Activated T-helper 1 cell treated with anti-CD3 and anti-CD28 coated beads, Interleukin-12 subunit alpha, Interleukin-12 subunit beta, Interleukin-2, Interleukin-4 antibody, amounts not matched to agents 30 ng/mL and 10 ng/mL and 1 ng/mL, durations not matched to agents 14 hours and 24 hours and 36 hours (primary cell): ENCODE measurements at regions of chr17 and their contacts with region 1.

Region 1: GRCh38 chr17:66633317-66633965 is 201.5 kb upstream of the CACNG5 start:
- DNase-seq: peak; percentile 66
- H3K4me3 Mint-ChIP-seq: peak overlapping the region; percentile 41
- H3K27ac Mint-ChIP-seq: peak overlapping the region; percentile 85
- H3K4me1 Mint-ChIP-seq: peaks cover 78% of the 10 kb centered on the region
- H3K27me3 Mint-ChIP-seq: no peaks in the 10 kb centered on the region

Region 2: DNA sequence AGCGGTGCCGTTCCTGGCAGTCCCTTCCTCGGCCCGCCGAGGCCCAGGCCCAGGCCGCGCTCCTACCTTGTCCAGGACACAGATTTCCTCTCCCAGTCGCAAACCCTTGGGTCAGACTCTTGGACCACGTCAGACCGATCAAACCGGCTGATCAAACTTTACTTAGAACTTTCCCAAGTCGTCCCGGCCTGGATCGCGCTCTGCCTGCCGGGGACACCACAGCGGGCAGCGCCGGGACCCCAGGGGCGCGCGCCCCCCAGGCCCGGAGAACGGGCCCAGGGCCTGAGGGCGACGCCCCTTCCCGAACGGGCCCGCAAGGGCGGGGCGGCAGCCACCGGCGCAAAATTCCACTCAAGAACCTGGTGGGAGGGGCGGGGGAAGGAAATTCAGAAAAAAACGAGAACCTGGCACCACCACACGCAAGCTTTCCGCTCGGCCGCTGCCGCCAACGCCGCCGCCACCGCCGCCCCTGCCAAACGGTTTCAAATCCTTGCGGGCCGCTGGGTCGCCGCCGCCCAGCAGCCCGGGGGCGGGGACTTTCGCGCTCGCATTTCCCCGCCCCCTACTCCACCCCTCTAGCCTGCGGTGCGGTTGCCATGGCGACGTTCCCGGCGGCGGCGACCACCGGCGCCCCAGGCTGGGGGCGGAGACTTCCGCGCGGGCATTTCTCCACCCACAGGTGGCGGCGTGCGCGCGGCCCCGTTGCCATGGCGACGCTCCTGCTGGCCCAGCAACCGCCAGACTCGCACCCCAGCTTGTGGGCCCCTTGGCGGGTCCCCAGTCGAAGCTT is 441.7 kb before region 1 on chr17 and contains the start of gene CEP112:
- intact Hi-C with region 1: loop called (anchors 1 kb)
- DNase-seq: peak; percentile 81
- H3K4me3 Mint-ChIP-seq: peak within 1 kb of the TSS; percentile 80
- H3K27ac Mint-ChIP-seq: peak within 1 kb of the TSS; percentile 70
- H3K4me1 Mint-ChIP-seq: peaks cover 15% of the 10 kb centered on the region
- H3K27me3 Mint-ChIP-seq: peaks cover 6% of the 10 kb centered on the region
- total RNA-seq, gene CEP112: 1.3 and 1.7 TPM in 2 replicates

Region 3: GRCh38 chr17:66255112-66255511 is 378.3 kb before region 1 on chr17:
- intact Hi-C with region 1: loop called (anchors 2 kb)
- DNase-seq: peak; percentile 26
- H3K4me3 Mint-ChIP-seq: no peak overlapping the region
- H3K27ac Mint-ChIP-seq: peak overlapping the region; percentile 76
- H3K4me1 Mint-ChIP-seq: peaks cover 20% of the 10 kb centered on the region
- H3K27me3 Mint-ChIP-seq: no peaks in the 10 kb centered on the region

Region 4: GRCh38 chr17:66508896-66509843 is 124.3 kb before region 1 on chr17:
- intact Hi-C with region 1: loop called (anchors 1 kb)
- DNase-seq: peak; percentile 29
- H3K4me3 Mint-ChIP-seq: peak overlapping the region; percentile 77
- H3K27ac Mint-ChIP-seq: peak overlapping the region; percentile 97
- H3K4me1 Mint-ChIP-seq: peaks cover 82% of the 10 kb centered on the region
- H3K27me3 Mint-ChIP-seq: no peaks in the 10 kb centered on the region

Region 5: DNA sequence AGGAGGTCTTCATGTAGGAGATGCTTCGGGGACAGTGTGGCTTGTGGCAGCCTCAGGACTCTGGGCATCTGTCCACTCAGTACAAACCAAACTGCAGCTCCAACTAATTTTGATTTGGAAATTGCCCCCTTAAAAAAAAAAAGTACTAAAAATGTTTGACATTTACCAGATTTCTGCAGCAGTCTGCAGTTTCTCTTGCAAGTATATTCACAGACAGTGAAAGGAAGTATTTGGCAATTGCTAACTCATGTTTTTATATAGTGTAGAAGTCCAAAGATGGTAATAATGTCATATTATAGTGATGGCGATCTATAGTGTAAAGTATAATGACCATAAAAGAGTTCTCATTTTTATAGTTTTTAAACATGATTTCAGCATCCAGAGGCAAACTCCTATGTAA is 112.4 kb before region 1 on chr17:
- intact Hi-C with region 1: no loop called
- DNase-seq: no peak
- H3K4me3 Mint-ChIP-seq: no peak overlapping the region
- H3K27ac Mint-ChIP-seq: no peak overlapping the region
- H3K4me1 Mint-ChIP-seq: peaks cover 85% of the 10 kb centered on the region
- H3K27me3 Mint-ChIP-seq: no peaks in the 10 kb centered on the region

Region 6: GRCh38 chr17:66655861-66656260 is 22.4 kb after region 1 on chr17:
- intact Hi-C with region 1: loop called (anchors 1 kb)
- DNase-seq: no peak
- H3K4me3 Mint-ChIP-seq: peak overlapping the region; percentile 46
- H3K27ac Mint-ChIP-seq: peak overlapping the region; percentile 81
- H3K4me1 Mint-ChIP-seq: peaks cover 55% of the 10 kb centered on the region
- H3K27me3 Mint-ChIP-seq: no peaks in the 10 kb centered on the region

Region 7: GRCh38 chr17:66673668-66674315 is 40.4 kb after region 1 on chr17:
- intact Hi-C with region 1: loop called (anchors 1 kb)
- DNase-seq: peak; percentile 44
- H3K4me3 Mint-ChIP-seq: peak overlapping the region; percentile 51
- H3K27ac Mint-ChIP-seq: peak overlapping the region; percentile 84
- H3K4me1 Mint-ChIP-seq: peaks cover 70% of the 10 kb centered on the region
- H3K27me3 Mint-ChIP-seq: no peaks in the 10 kb centered on the region